Activated T-helper 2 cell treated with anti-CD3 and anti-CD28 coated beads, Interferon-gamma antibody, Interleukin-2, Interleukin-4, amounts not matched to agents 10 μg/mL and 5 μg/mL and 100 μg/mL, durations not matched to agents 14 hours and 24 hours and 36 hours (primary cell): ENCODE measurements at regions of chr11 and their contacts with region 1.

Region 1: GRCh38 chr11:117026593-117027330 is 71.5 kb downstream of the SIK3 start:
- DNase-seq: no peak
- H3K4me3 Mint-ChIP-seq: peak overlapping the region; percentile 43
- H3K27ac Mint-ChIP-seq: peak overlapping the region; percentile 92
- H3K4me1 Mint-ChIP-seq: peaks cover 63% of the 10 kb centered on the region
- H3K27me3 Mint-ChIP-seq: no peaks in the 10 kb centered on the region

Region 2: DNA sequence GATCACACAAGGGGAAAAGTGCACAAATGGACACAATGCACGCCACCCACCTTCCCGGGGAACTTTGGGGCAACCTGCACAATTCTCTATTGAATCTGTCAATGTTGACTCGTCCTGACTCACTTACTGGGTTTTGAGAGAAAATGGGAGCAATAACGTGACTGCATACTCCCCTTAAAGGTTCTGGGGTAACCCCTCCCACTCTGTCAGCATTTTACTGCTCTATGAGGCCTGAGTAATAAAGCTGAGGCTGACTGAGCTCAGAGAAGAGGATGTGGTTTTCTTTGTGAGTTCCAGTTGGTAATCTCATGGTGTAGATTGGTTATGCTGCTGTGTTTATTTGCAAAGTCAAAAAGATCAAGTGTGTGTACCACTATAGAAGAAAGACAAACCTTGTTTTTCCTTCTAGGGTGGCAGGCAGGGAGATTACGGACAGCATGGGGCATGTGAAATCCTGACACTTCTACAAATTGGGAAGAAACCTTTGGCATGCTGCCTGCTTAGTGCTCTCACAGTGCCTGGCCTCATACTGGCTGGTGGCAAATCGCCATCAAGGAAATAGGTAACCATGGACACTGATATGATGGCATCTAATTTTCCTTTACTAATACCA is 173.2 kb before region 1 on chr11:
- intact Hi-C with region 1: loop called (anchors 1 kb)
- DNase-seq: peak; percentile 69
- H3K4me3 Mint-ChIP-seq: peak overlapping the region; percentile 53
- H3K27ac Mint-ChIP-seq: peak overlapping the region; percentile 90
- H3K4me1 Mint-ChIP-seq: peaks cover 52% of the 10 kb centered on the region
- H3K27me3 Mint-ChIP-seq: no peaks in the 10 kb centered on the region

Region 3: DNA sequence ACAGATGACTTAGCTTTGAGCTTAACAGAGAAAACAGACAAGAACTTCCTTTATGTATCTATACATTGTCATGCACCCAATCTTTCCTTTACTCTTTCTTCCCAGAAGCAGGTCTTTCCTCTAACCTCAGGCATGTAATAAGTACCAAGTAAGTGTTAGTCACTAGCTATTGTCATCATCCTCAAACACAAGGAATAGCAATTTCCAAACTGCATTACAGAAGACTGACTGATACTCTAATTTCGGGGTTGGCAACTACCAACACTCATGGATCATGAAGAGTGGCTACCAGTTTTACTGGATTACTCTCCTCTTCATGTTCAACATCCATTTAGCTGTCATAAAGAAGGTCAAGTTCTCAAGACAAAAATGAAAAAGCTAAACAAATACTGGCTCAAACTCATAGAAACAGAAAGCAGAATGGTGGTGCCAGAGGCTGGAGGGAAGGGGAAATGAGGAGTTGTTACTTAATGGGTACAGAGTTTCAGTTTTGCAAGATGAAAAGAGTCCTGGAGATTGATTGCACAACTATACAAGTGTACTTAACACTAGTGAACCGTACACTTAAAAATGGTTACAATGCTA is 40.1 kb before region 1 on chr11:
- intact Hi-C with region 1: loop called (anchors 1 kb)
- DNase-seq: no peak
- H3K4me3 Mint-ChIP-seq: peak overlapping the region; percentile 49
- H3K27ac Mint-ChIP-seq: peak overlapping the region; percentile 80
- H3K4me1 Mint-ChIP-seq: peaks cover 56% of the 10 kb centered on the region
- H3K27me3 Mint-ChIP-seq: no peaks in the 10 kb centered on the region

Region 4: DNA sequence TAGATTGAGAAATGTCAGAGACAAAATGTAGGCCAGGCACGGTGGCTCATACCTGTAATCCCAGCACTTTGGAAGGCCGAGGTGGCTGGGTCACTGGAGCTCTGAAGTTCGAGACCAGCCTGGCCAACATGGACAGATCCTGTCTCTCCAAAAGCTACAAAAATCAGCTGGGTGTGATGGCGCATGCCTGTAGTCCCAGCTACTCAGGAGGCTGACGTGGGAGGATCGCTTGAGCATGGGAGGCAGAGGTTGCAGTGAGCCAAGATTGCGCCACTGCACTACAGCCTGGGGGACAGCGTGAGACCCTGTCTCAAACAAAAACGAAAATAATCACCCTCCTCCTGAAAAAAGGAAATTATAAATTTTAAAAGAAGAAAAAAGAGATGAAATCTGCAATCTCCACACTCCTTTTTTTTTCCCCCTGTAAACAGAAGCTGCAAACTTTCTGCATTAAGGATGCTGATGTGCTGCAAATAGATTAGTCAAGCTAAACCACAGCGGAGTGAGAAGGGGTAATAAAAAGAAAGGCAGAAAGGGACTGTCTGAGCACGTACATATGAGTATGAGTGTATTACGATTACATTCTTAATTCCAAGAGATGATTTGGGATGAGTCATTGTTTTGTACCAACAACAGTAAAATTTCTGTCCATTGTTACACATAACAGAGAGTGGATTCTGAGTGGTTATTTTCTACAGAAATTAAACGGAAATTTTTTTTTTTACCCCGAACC is 15.8 kb before region 1 on chr11:
- intact Hi-C with region 1: loop called (anchors 1 kb)
- DNase-seq: no peak
- H3K4me3 Mint-ChIP-seq: no peak overlapping the region
- H3K27ac Mint-ChIP-seq: peak overlapping the region; percentile 74
- H3K4me1 Mint-ChIP-seq: peaks cover 35% of the 10 kb centered on the region
- H3K27me3 Mint-ChIP-seq: no peaks in the 10 kb centered on the region

Region 5: GRCh38 chr11:117058761-117059261 is 32.0 kb after region 1 on chr11:
- intact Hi-C with region 1: loop called (anchors 1 kb)
- DNase-seq: no peak
- H3K4me3 Mint-ChIP-seq: no peak overlapping the region
- H3K27ac Mint-ChIP-seq: no peak overlapping the region
- H3K4me1 Mint-ChIP-seq: peaks cover 36% of the 10 kb centered on the region
- H3K27me3 Mint-ChIP-seq: no peaks in the 10 kb centered on the region

Region 6: DNA sequence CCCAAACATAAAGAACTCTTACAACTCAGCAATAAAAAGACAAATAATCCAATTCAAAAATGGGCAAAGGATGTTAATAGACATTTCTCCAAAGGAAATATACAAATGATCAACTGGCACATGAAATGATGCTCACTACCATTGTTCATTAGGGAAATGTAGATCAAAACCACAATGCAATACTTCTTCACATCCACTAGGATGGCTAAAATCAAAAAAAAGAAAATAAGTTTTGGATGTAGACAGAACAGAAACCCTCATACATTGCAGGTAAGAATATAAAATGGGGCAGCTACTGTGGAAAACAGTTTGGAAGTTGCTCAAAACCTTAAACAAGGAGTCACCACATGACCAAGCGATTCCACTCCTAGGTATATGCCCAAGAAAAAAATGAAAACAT is 55.1 kb after region 1 on chr11:
- intact Hi-C with region 1: no loop called
- DNase-seq: no peak
- H3K4me3 Mint-ChIP-seq: no peak overlapping the region
- H3K27ac Mint-ChIP-seq: no peak overlapping the region
- H3K4me1 Mint-ChIP-seq: peaks cover 26% of the 10 kb centered on the region
- H3K27me3 Mint-ChIP-seq: no peaks in the 10 kb centered on the region

Region 7: DNA sequence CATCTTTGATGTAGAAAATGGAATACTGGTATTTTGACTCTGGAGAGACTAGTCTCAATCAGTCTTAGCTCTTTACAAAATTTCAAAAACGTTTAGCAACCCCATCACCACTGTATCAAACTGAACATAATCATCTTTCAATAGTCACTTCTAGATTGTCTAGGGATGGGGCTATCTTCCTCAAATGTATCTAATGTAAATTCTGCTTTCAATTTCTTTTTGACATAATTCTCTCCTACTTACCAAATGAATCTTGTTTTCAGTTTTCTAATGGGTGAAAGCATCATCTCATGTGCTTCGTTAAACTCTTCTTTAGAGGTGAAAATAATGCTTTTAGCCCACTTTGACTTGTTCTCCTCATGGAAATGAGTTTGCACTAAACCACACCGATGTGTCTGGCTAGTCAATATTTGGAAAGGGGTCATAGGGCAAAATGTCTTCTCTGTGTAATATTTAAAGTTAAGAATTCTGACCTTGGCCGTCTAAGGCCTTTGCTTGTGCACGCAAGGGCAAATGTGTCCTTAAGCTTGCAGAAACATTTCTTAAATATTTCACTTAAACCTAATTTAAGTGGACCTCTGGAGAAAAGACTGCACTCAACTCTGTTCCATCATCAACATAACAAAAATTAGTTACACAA is 66.3 kb after region 1 on chr11:
- intact Hi-C with region 1: loop called (anchors 1 kb)
- DNase-seq: no peak
- H3K4me3 Mint-ChIP-seq: no peak overlapping the region
- H3K27ac Mint-ChIP-seq: peak overlapping the region; percentile 67
- H3K4me1 Mint-ChIP-seq: peaks cover 70% of the 10 kb centered on the region
- H3K27me3 Mint-ChIP-seq: no peaks in the 10 kb centered on the region